Activated T-helper 1 cell treated with anti-CD3 and anti-CD28 coated beads, Interleukin-12 subunit alpha, Interleukin-12 subunit beta, Interleukin-2, Interleukin-4 antibody, amounts not matched to agents 30 ng/mL and 10 ng/mL and 1 ng/mL, durations not matched to agents 14 hours and 24 hours and 36 hours (primary cell): ENCODE measurements at regions of chr13 and their contacts with region 1.

Region 1: GRCh38 chr13:20525690-20526544 is at the start of gene CRYL1:
- DNase-seq: peak; percentile 67
- H3K4me3 Mint-ChIP-seq: peak within 1 kb of the TSS; percentile 87
- H3K27ac Mint-ChIP-seq: peak within 1 kb of the TSS; percentile 73
- H3K4me1 Mint-ChIP-seq: peaks cover 38% of the 10 kb centered on the region
- H3K27me3 Mint-ChIP-seq: peaks cover 1% of the 10 kb centered on the region
- total RNA-seq, gene CRYL1: 3.9 and 5.6 TPM in 2 replicates

Region 2: GRCh38 chr13:20418953-20419352 is 107.0 kb before region 1 on chr13:
- intact Hi-C with region 1: loop called (anchors 1 kb)
- DNase-seq: no peak
- H3K4me3 Mint-ChIP-seq: no peak overlapping the region
- H3K27ac Mint-ChIP-seq: peak overlapping the region; percentile 42
- H3K4me1 Mint-ChIP-seq: peaks cover 57% of the 10 kb centered on the region
- H3K27me3 Mint-ChIP-seq: peaks cover 2% of the 10 kb centered on the region

Region 3: DNA sequence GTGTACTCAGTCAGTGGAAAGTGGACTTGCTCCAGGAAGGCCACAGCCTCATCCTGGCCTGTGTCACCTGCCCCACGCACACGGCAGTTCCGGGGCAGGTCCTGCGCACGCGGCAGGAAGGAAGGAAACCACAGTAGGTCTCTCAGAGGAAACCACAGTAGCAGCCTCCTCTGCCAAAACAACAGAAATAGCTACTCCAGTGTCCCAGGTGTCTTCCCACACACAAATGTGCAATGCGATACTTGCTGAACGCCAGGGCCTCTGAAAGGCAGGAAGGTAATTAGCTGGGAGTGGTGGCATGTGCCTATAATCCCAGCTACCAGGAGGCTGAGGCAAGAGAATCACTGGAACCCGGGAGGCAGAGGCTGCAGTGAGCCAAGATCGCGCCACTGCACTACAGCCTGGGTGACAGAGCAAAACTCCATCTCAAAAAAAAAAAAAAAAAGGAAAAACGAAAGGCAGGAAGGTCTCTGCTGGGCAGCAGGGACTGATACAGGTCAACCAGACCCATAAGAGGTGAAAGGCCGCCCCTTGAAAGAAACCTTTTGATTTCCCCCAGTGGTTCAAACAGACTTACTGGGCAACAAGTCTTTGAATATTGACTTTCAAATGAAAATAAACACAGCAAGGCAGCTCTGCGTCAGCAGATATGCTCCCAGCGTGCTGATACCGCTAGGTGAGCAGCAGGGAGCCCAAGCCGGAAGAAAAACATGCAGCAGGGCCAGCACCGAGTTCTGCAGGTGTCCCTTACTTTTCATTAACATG is 49.8 kb before region 1 on chr13:
- intact Hi-C with region 1: loop called (anchors 5 kb)
- DNase-seq: peak; percentile 64
- H3K4me3 Mint-ChIP-seq: peak overlapping the region; percentile 66
- H3K27ac Mint-ChIP-seq: peak overlapping the region; percentile 89
- H3K4me1 Mint-ChIP-seq: peaks cover 35% of the 10 kb centered on the region
- H3K27me3 Mint-ChIP-seq: peaks cover 16% of the 10 kb centered on the region

Region 4: DNA sequence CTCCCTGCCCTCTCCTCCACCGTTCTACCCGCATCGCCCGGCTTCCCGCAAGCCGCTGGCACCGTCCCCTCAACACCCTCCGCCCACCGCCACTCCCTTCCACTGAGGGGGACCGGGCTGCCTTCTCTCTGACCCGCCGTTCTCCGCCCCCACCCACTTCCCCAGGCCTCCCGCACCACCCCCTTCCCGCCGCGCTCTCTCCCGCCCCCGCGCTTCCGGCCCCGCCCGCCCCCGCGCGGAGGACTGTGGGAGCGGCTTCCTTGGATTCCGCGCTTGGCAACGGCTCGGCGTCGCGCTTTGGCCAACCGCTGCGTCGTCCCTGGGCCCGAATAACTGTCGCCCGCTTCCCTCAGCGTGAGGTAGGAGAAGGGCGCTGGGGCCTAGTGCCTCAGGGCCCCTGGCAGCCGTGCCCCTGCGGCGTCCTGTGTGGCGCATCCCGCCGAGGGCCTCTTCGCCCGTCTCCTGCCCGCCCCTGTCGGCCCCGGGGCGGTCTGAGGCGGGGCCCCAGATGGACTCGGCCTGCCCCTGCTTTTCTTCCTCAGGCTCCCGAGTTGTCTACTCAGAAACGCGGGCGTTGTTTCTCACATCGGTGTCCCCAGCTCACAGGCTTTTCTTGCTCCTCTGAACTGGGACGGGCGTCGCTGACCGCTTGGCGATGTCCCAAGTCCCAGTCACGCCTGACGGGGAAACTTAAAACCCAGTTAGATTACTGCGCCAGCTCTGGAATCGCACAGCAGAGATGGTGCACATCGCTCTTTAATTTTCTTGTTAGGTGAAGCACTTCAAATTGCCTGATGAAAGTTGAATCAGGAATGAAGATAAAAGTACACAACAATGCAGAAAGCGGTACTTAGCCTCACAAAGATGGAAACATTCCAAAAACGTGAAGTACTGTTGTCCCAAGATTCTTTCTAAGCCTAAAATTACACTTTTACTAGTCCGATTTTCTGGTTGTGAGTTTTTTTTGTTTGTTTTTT is 41.3 kb after region 1 on chr13 and contains the start of gene IFT88:
- intact Hi-C with region 1: loop called (anchors 1 kb)
- DNase-seq: peak; percentile 85
- H3K4me3 Mint-ChIP-seq: peak within 1 kb of the TSS; percentile 88
- H3K27ac Mint-ChIP-seq: peak within 1 kb of the TSS; percentile 88
- H3K4me1 Mint-ChIP-seq: peaks cover 27% of the 10 kb centered on the region
- H3K27me3 Mint-ChIP-seq: no peaks in the 10 kb centered on the region
- total RNA-seq, gene IFT88: 1.5 TPM in 2 replicates

Region 5: DNA sequence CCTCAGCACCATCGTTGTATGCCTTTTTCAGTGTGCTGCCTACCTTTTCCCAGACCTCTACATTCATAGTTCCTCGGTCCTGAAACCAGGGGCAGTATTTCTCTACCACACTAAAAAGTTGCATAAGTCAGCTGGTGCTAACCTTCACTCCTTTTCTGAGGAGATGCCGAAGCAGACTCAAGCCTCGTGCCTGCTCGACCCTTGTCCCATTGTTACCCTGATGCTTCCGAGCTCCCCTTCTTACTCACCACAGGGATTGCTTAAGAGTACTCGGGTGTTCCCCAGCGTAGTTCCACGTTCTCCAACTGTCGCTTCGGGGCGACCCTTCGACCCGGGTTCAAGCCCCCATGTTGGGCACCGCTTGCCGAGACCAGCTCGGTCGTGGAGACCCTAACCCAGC is 158.6 kb after region 1 on chr13:
- intact Hi-C with region 1: no loop called
- DNase-seq: no peak
- H3K4me3 Mint-ChIP-seq: no peak overlapping the region
- H3K27ac Mint-ChIP-seq: no peak overlapping the region
- H3K4me1 Mint-ChIP-seq: no peaks in the 10 kb centered on the region
- H3K27me3 Mint-ChIP-seq: peaks cover 4% of the 10 kb centered on the region

Region 6: GRCh38 chr13:20703780-20704445 is 178.0 kb after region 1 on chr13:
- intact Hi-C with region 1: loop called (anchors 2 kb)
- DNase-seq: peak; percentile 65
- H3K4me3 Mint-ChIP-seq: no peak overlapping the region
- H3K27ac Mint-ChIP-seq: no peak overlapping the region
- H3K4me1 Mint-ChIP-seq: peaks cover 5% of the 10 kb centered on the region
- H3K27me3 Mint-ChIP-seq: peaks cover 40% of the 10 kb centered on the region

Region 7: DNA sequence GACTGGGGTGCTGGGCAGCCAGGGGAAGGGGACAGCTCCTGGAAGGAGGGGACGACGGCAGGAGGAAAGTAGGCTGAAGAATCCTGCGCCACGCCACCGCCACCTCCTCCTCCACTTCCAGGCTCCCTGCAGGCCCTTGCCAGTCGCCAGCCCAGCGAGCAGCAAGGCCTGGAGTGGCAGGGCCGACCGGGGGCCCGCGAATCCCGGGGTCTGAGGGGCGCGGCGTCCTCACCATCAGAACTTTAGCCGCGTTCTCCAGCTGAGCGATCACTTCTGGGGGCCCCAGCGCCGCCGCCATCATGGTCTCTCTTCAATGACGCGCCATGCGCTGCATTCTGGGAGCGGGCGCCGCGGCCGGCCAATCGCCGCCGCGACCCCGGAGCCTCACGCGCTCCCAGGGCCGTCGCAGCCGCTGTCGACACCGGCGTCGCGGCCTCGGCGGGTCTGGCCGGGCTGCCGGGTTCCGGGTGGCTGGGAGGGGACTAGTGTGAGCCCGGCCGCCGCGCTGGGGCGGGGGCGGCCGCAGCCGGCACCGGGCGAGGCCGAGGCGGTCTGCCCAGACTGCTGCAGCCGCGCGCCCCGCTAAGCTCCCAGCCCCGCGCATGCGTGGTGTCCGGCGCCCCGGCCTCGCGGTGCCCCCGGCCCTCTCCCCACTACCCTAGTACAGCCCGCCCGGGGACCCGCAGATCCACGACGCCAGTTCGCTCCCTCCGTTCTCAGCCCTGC is 376.7 kb after region 1 on chr13 and contains the start of gene XPO4:
- intact Hi-C with region 1: loop called (anchors 2 kb)
- DNase-seq: peak; percentile 80
- H3K4me3 Mint-ChIP-seq: peak within 1 kb of the TSS; percentile 99
- H3K27ac Mint-ChIP-seq: peak within 1 kb of the TSS; percentile 94
- H3K4me1 Mint-ChIP-seq: peaks cover 32% of the 10 kb centered on the region
- H3K27me3 Mint-ChIP-seq: peaks cover 6% of the 10 kb centered on the region
- total RNA-seq, gene XPO4: 33.5 and 34.1 TPM in 2 replicates